ENCODE measurements at regions of chr20 and their contacts with region 1.

Region 1: GRCh38 chr20:59525500-59526241 is 78.7 kb upstream of the PHACTR3 start:
- DNase-seq: peak; percentile 59
- ATAC-seq: peak; percentile 97
- H3K4me3 ChIP-seq: no peak overlapping the region
- H3K27ac ChIP-seq: no peak overlapping the region
- H3K4me1 ChIP-seq: no peaks in the 10 kb centered on the region
- H3K27me3 ChIP-seq: peaks cover 0 to 22% of the 10 kb centered on the region in 2 experiments; a peak in 1 of 5 replicates
- CTCF ChIP-seq: peak; percentile 89
- EP300 ChIP-seq: 0 out of 4 replicates have a peak, but pooled peaks of 1 of the 2 experiments have one; percentile 12
- POLR2A ChIP-seq: no peak
- RAD21 ChIP-seq: peak; percentile 67

Region 2: DNA sequence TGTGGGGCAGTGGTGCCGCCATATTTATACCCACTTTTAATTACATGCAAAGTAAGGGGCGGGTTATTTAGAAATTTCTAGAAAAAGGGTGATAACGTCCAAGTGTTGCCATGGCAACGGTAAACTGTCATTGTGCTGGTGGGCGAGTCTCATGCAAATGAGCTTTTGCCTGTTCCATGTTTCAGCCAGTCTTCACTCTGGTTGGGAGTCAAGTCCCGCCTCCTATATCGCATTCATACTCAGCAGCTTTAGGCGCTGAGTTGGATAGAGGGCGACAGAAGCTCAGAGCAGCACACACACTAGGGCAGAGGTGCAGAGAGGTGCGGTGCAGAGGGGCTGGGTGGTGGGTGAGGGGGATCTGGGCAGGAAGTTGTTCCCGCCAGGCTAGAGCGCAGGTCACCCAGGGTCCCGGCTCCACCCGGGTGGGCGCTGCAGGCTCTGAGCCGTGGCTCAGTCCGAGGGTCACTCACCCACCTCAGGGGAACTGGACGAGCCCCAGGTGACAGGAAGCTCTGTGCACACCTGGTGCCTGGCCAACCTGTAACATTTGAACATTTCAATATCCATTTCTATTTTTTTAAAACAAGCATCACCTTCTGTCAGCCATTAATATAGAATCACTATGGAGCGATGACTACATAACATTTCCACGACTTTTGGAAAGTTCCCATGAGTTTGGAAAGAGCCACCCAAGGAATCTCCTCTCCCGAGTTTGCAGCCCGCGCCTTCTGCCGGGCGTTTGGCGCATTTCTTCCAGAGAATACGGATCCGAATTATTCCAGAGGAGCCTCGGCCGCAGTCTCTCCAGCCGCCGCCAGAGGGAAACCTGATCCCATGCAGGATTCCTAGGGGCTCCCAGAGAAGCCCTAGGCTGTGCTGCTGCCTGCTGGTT is 10.4 kb before region 1 on chr20:
- CTCF ChIA-PET with region 1: interaction called, 43 read pairs
- POLR2A ChIA-PET with region 1: no interaction called
- in situ Hi-C with region 1: no loop called
- intact Hi-C with region 1: loop called (anchors 1 kb)
- DNase-seq: peak; percentile 73
- ATAC-seq: peak; percentile 97
- H3K4me3 ChIP-seq: no peak overlapping the region
- H3K27ac ChIP-seq: no peak overlapping the region
- H3K4me1 ChIP-seq: no peaks in the 10 kb centered on the region
- H3K27me3 ChIP-seq: peaks cover 0 to 2% of the 10 kb centered on the region in 2 experiments; a peak in 1 of 5 replicates
- CTCF ChIP-seq: peak; percentile 81
- EP300 ChIP-seq: no peak
- POLR2A ChIP-seq: no peak
- RAD21 ChIP-seq: peak; percentile 54

Region 3: GRCh38 chr20:59678288-59678687 is 152.6 kb after region 1 on chr20:
- CTCF ChIA-PET with region 1: no interaction called
- POLR2A ChIA-PET with region 1: no interaction called
- in situ Hi-C with region 1: no loop called
- intact Hi-C with region 1: no loop called
- DNase-seq: no peak
- ATAC-seq: no peak
- H3K4me3 ChIP-seq: no peak overlapping the region
- H3K27ac ChIP-seq: no peak overlapping the region
- H3K4me1 ChIP-seq: no peaks in the 10 kb centered on the region
- H3K27me3 ChIP-seq: peaks cover 4 to 59% of the 10 kb centered on the region in 2 experiments; a peak in 4 of 5 replicates
- CTCF ChIP-seq: no peak
- EP300 ChIP-seq: no peak
- POLR2A ChIP-seq: no peak
- RAD21 ChIP-seq: no peak